Endothelial cell of umbilical vein (primary cell): ENCODE measurements at regions of chr1 and their contacts with region 1.

Region 1: GRCh38 chr1:36463803-36464604 is at the start of gene MRPS15:
- DNase-seq: peak; percentile 94
- H3K4me3 ChIP-seq: peak within 1 kb of the TSS; percentile 63 to 86 (median 85)
- H3K27ac ChIP-seq: peak within 1 kb of the TSS; percentile 87
- H3K4me1 ChIP-seq: peaks cover 10% of the 10 kb centered on the region
- H3K27me3 ChIP-seq: no peaks in the 10 kb centered on the region
- CTCF ChIP-seq: no peak
- POLR2A ChIP-seq: peak; percentile 89
- total RNA-seq, gene MRPS15: 105 and 106 TPM in 2 replicates

Region 2: GRCh38 chr1:36450270-36450918 is 13.6 kb before region 1 on chr1 and contains the start of gene OSCP1:
- CTCF ChIA-PET with region 1: interaction called, 7 read pairs
- POLR2A ChIA-PET with region 1: interaction called, 7 read pairs
- dilution Hi-C with region 1: no loop called
- intact Hi-C with region 1: loop called (anchors 1 kb)
- DNase-seq: peak; percentile 97
- H3K4me3 ChIP-seq: peak within 1 kb of the TSS; percentile 46 to 67 (median 50)
- H3K27ac ChIP-seq: peak within 1 kb of the TSS; percentile 89
- H3K4me1 ChIP-seq: peaks cover 4% of the 10 kb centered on the region
- H3K27me3 ChIP-seq: no peaks in the 10 kb centered on the region
- CTCF ChIP-seq: no peak
- POLR2A ChIP-seq: peak; percentile 92
- total RNA-seq, gene OSCP1: 4.6 and 7.6 TPM in 2 replicates

Region 3: DNA sequence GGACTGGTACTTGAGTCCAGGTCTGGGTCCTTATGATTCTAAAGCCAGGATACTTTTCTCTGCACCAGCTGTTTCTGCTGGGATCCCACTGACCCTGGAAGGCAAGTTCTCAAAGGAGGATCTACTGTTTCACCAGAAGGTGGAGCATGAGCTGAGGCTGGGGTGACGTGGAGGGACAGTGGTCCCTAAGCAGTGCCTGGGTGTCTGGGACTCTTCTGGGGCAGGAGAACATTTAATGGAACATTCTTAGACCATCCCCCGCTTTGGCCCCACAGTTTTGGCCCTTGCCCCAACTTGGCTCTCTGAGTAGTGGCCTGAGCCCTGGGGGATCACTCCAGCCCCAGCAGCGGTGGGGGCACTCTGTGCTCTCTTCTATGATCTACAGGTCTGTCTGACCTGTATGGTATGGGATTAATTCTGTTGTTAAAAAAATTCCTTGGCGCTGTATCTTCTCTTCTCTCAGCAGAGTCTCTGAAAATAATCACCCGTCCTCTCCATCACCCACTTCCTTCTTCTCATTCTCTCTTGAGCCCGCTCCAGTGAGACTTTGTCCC is 79.0 kb after region 1 on chr1:
- CTCF ChIA-PET with region 1: no interaction called
- POLR2A ChIA-PET with region 1: no interaction called
- dilution Hi-C with region 1: no loop called
- intact Hi-C with region 1: no loop called
- DNase-seq: no peak
- H3K4me3 ChIP-seq: no peak overlapping the region
- H3K27ac ChIP-seq: no peak overlapping the region
- H3K4me1 ChIP-seq: no peaks in the 10 kb centered on the region
- H3K27me3 ChIP-seq: peaks cover 0 to 4% of the 10 kb centered on the region in 2 experiments
- CTCF ChIP-seq: peak in 1 of 2 donors; percentile 28
- POLR2A ChIP-seq: no peak